Aorta (tissue), 5 donors: ENCODE measurements at regions of chr15 and their contacts with region 1.

Region 1: GRCh38 chr15:75732809-75733451 is 20.3 kb upstream of the CSPG4 start:
- DNase-seq: peak; percentile 74 to 87
- ATAC-seq: peak; percentile 84
- H3K4me3 ChIP-seq: no peak overlapping the region
- H3K27ac ChIP-seq: no peak overlapping the region
- H3K4me1 ChIP-seq: no peaks in the 10 kb centered on the region
- H3K27me3 ChIP-seq: no peaks in the 10 kb centered on the region

Region 2: DNA sequence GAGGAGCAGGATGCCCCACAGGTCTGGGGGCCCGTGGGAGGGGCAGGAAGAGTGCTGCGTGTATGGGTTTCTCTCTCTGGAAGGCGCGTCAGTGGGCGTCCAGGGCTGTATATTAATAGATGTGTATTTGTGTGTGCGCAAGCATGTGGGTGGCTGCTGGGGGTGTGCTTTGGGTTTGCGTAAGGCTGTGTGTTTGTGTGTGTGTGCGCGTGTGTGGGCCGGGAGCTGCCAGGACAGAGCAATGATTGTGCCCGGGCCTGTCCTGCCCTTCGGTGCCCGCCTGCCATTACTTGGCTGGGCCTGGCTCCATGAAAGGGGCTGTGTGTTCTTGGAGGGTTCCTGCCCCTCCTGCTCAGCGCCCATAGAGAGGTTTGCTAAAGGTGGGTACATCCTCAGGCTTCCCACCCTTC is 36.6 kb before region 1 on chr15:
- intact Hi-C with region 1: no loop called
- DNase-seq: peak in 1 of 2 donors; percentile 86
- ATAC-seq: peak; percentile 43
- H3K4me3 ChIP-seq: no peak overlapping the region
- H3K27ac ChIP-seq: peak overlapping the region; percentile 30 to 96
- H3K4me1 ChIP-seq: no peaks in the 10 kb centered on the region
- H3K27me3 ChIP-seq: no peaks in the 10 kb centered on the region

Region 3: DNA sequence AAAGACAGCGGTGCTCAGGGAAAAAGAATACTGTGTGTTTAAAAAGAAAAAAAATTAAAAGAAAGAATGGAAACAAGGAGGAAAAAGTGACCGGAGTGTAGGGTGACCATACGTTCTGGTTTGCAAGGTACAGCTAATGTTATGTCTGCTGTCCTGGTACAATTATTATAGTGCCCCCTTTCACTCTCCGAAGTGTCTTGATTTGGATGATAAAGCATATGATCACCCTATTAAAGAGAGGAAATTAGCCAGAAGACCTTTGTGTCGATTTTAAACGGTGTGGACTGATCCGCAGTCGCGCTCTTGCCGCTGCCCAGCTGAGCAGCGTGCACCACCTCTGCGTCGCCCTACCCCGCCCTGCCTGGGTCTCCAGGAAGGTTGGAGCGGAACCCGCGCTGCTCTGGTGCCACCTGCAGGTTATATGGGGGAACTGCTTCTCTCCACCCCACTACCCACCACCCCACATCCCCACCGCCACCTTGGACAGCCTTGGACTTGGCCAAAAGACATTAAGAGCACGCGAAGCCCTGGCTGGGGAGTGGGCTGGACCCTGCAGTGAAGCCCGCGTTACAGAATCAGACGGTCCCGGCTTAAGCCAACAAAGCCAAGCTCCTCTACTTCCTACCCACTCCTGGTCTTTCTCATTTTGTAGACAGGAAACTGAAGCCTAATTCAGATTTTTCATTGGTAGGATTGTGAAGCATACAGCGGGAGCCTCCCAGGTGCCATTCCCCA is 69.1 kb after region 1 on chr15:
- intact Hi-C with region 1: loop called (anchors 5 kb)
- DNase-seq: peak; percentile 85 to 93
- ATAC-seq: peak; percentile 98
- H3K4me3 ChIP-seq: no peak overlapping the region
- H3K27ac ChIP-seq: no peak overlapping the region
- H3K4me1 ChIP-seq: no peaks in the 10 kb centered on the region
- H3K27me3 ChIP-seq: no peaks in the 10 kb centered on the region